AG04450 (cell line): ENCODE measurements at regions of chr20 and their contacts with region 1.

Region 1: GRCh38 chr20:48904365-48905296 is 16.9 kb upstream of the ARFGEF2 start:
- DNase-seq: no peak
- H3K4me3 ChIP-seq: no peak overlapping the region
- H3K27ac ChIP-seq: no peak overlapping the region
- H3K27me3 ChIP-seq: peaks cover 5% of the 10 kb centered on the region
- CTCF ChIP-seq: peak; percentile 85

Region 2: DNA sequence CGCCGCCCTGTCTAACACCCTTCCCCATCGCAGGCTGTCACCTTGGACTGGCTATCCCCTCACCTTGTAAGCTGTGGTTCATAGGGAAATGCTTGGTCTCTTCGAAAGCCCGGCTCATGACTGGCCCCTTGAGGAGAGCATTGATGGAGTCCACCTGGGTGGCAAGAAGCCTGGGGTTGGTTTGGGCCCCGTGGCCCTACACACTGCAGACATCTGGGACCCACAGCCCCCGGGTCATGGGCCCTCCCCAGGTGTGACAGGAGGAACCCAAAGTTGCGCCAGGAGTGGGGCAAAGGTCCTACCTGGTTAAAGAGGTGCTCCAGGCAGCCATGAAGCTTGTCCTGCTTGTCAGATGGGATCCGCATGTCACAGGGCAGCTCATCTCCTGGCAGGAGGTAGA is 262.5 kb before region 1 on chr20:
- CTCF ChIA-PET with region 1: interaction called, 31 read pairs
- POLR2A ChIA-PET with region 1: no interaction called
- DNase-seq: no peak
- H3K4me3 ChIP-seq: no peak overlapping the region
- H3K27ac ChIP-seq: no peak overlapping the region
- H3K27me3 ChIP-seq: peaks cover 3% of the 10 kb centered on the region
- CTCF ChIP-seq: no peak

Region 3: DNA sequence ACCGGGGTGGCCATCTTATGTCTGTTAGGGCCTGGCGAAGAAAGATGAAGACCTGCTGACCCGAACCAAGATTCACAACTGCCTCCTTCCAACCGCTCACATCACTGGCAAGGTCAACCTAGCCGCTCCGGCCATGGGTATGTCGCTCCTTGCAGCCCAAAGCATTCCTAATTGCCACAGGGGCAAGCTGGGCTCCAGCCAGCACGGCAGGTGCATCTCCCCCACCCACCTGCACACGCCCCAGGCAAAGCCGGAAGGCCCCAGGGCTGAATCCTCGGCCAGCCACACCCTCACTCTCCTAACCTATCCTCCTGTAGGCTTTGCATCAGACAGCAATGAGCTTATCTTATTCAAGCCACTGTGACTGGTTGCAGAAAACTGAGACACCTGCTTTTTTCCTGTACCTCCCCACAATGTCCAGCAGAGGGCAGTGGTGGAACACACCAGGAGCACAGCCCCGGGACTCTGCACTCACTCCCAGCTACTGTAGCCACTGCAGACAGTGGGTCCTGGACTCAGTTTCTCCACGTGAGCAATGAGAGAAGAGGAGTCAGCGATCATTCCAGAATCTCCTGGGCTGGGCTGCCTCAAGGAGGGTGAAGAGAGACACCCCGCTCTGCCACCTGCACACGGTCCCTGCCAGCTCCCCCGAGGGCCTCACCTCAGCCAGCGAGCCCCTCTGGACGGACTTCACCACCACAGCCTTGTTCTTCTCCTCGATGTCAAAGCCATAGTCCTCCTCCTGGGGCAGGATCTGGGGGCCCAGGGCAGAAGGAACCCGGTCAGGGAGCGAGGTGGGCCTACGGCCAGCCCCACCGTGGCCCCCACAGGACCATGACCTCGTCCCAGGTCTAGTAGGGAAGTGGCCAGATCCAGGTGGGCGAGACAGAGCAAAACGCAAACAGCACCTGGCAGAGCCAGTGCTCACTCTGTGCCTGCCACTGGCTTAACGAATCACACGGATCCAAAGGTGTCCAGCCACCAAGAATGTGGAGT is 246.9 kb before region 1 on chr20:
- CTCF ChIA-PET with region 1: interaction called, 401 read pairs
- POLR2A ChIA-PET with region 1: no interaction called
- DNase-seq: peak; percentile 53
- H3K4me3 ChIP-seq: no peak overlapping the region
- H3K27ac ChIP-seq: no peak overlapping the region
- H3K27me3 ChIP-seq: peaks cover 3% of the 10 kb centered on the region
- CTCF ChIP-seq: peak; percentile 97

Region 4: GRCh38 chr20:48921151-48921898 is 16.7 kb after region 1 on chr20 and contains the start of gene ARFGEF2:
- CTCF ChIA-PET with region 1: interaction called, 23 read pairs
- POLR2A ChIA-PET with region 1: interaction called, 7 read pairs
- DNase-seq: peak; percentile 56
- H3K4me3 ChIP-seq: peak within 1 kb of the TSS; percentile 95
- H3K27ac ChIP-seq: peak within 1 kb of the TSS; percentile 75
- H3K27me3 ChIP-seq: peaks cover 6% of the 10 kb centered on the region
- CTCF ChIP-seq: no peak
- polyA plus RNA-seq, gene ARFGEF2: 20.5 and 22.3 TPM in 2 replicates

Region 5: GRCh38 chr20:49344975-49345374 is 440.3 kb after region 1 on chr20:
- CTCF ChIA-PET with region 1: no interaction called
- POLR2A ChIA-PET with region 1: no interaction called
- DNase-seq: peak; percentile 78
- H3K4me3 ChIP-seq: no peak overlapping the region
- H3K27ac ChIP-seq: peak overlapping the region; percentile 85
- H3K27me3 ChIP-seq: peaks cover 4% of the 10 kb centered on the region
- CTCF ChIP-seq: no peak